HCT116 (cell line): ENCODE measurements at regions of chr3 and their contacts with region 1.

Region 1: DNA sequence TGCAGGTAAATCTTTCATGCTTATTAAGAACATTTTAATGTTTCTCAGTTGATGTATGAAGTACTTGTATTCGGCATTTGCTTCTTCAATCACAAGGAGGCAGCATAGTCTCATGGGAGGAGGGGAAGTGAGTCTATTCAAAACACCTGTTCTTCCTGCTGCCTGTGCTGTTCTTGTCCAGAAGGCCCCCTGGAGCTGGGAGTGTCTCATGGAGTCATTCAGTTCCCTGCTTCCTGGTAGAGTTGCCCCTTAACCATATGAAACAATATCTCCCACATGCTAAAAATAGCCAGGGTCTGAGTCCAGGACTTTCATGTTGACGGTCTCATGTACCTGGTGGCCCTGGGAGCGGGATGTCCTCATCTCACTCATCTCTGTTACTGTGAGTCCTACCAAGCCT is 15.5 kb upstream of the PPP1R2 start:
- DNase-seq: peak; percentile 52
- ATAC-seq: peak; percentile 84
- H3K4me3 ChIP-seq: no peak overlapping the region
- H3K27ac ChIP-seq: no peak overlapping the region
- H3K4me1 ChIP-seq: peaks cover 0 to 13% of the 10 kb centered on the region in 2 experiments; a peak in 2 of 4 replicates
- H3K27me3 ChIP-seq: no peaks in the 10 kb centered on the region
- CTCF ChIP-seq: peak; percentile 64 to 90 (median 67)
- POLR2A ChIP-seq: no peak
- RAD21 ChIP-seq: peak; percentile 93

Region 2: DNA sequence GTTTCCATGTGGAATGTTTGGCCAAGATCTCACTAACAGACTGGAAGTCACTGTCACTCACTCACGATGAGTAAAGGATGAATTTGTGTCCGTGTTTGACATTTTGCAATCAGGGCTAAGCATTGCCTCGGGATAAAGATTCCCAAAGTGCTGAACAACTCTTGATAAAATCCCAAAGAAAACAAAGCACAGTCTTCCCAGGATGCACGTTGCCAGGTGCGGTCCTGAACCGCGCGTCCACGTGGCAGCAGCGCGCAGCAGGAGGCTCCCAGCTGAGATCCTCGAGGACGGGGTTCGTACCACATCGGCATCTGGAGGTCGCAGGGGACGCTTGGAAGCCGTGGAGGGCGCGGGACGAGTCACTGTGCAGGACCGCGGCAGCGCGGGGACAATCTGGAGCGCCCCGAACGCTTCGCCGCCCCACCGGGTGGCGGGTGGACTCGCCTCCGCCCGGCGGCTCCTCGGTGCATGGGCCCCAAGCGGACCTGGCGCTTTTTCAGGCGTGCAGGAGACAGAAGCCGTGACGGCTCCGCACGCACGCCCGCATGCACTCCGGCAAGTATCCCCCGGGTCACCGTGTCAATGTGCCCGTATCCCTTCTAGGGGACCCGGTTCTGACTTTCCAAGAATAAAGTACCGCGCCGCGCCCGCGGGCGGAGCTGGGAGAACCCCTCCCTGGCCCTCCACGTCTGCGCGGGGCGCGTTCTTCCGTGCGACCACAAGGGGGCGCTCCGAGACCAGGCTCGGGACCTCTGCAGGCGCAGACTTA is 1225.2 kb before region 1 on chr3:
- CTCF ChIA-PET with region 1: no interaction called
- POLR2A ChIA-PET with region 1: no interaction called
- RAD21 ChIA-PET with region 1: no interaction called
- intact Hi-C with region 1: no loop called
- DNase-seq: peak; percentile 76
- ATAC-seq: peak; percentile 94
- H3K4me3 ChIP-seq: peak overlapping the region; percentile 42 to 49
- H3K27ac ChIP-seq: no peak overlapping the region; the same call in 1 of the 2 replicates
- H3K4me1 ChIP-seq: peaks cover 14 to 35% of the 10 kb centered on the region in 2 experiments; a peak in 3 of 4 replicates
- H3K27me3 ChIP-seq: no peaks in the 10 kb centered on the region
- CTCF ChIP-seq: peak in 2 of 3 experiments; percentile 89 to 97; a peak in 4 of 6 replicates
- POLR2A ChIP-seq: no peak
- RAD21 ChIP-seq: no peak

Region 3: DNA sequence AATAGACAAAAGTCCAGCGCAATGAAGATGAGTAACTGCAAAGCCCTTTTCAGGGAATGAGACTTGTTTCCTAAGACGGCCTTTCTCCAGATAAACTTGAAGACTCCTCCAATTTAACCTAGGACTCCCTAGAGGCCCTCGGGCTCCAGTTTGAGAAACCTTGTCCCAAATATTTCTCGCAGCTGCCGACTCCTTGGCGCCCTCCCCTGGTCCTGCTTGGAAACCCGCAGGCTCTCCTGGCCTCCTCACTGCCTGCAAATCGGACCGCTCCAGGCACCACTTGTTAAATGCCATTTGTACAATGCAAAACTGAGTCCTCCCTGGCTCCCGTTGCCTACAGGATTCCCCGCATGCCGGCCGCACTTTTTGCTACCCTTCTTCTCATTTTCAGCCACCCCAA is 216.3 kb after region 1 on chr3:
- CTCF ChIA-PET with region 1: no interaction called
- POLR2A ChIA-PET with region 1: no interaction called
- RAD21 ChIA-PET with region 1: no interaction called
- intact Hi-C with region 1: loop called (anchors 5 kb)
- DNase-seq: peak; percentile 27
- ATAC-seq: peak; percentile 89
- H3K4me3 ChIP-seq: no peak overlapping the region
- H3K27ac ChIP-seq: no peak overlapping the region
- H3K4me1 ChIP-seq: no peaks in the 10 kb centered on the region
- H3K27me3 ChIP-seq: no peaks in the 10 kb centered on the region
- CTCF ChIP-seq: peak; percentile 71 to 84 (median 81)
- POLR2A ChIP-seq: no peak
- RAD21 ChIP-seq: peak; percentile 79

Region 4: GRCh38 chr3:195850857-195851543 is 292.4 kb after region 1 on chr3:
- CTCF ChIA-PET with region 1: interaction called, 3 read pairs
- POLR2A ChIA-PET with region 1: no interaction called
- RAD21 ChIA-PET with region 1: no interaction called
- intact Hi-C with region 1: loop called (anchors 1 kb)
- DNase-seq: peak; percentile 89
- ATAC-seq: peak; percentile 68
- H3K4me3 ChIP-seq: no peak overlapping the region
- H3K27ac ChIP-seq: no peak overlapping the region
- H3K4me1 ChIP-seq: peaks cover 12 to 21% of the 10 kb centered on the region in 2 experiments
- H3K27me3 ChIP-seq: no peaks in the 10 kb centered on the region
- CTCF ChIP-seq: peak; percentile 100
- POLR2A ChIP-seq: no peak
- RAD21 ChIP-seq: peak; percentile 100